Activated naive CD8-positive, alpha-beta T cell treated with anti-CD3 and anti-CD28 coated beads, Interleukin-2, amount 10 ng/mL, durations not matched to agents 7 days and 5 days (primary cell): ENCODE measurements at regions of chr6 and their contacts with region 1.

Region 1: GRCh38 chr6:28923318-28924102 is at the start of gene TRIM27:
- DNase-seq: peak; percentile 90
- ATAC-seq: peak; percentile 82
- H3K4me3 Mint-ChIP-seq: peak within 1 kb of the TSS; percentile 96
- H3K27ac Mint-ChIP-seq: peak within 1 kb of the TSS; percentile 95
- H3K4me1 Mint-ChIP-seq: peaks cover 22% of the 10 kb centered on the region
- H3K27me3 Mint-ChIP-seq: no peaks in the 10 kb centered on the region
- total RNA-seq, gene TRIM27: 64.4 to 67.1 TPM

Region 2: GRCh38 chr6:28719275-28719940 is 204.1 kb before region 1 on chr6:
- POLR2A ChIA-PET with region 1: no interaction called
- DNase-seq: no peak
- ATAC-seq: no peak
- H3K4me3 Mint-ChIP-seq: no peak overlapping the region
- H3K27ac Mint-ChIP-seq: no peak overlapping the region
- H3K4me1 Mint-ChIP-seq: no peaks in the 10 kb centered on the region
- H3K27me3 Mint-ChIP-seq: peaks cover 44% of the 10 kb centered on the region

Region 3: DNA sequence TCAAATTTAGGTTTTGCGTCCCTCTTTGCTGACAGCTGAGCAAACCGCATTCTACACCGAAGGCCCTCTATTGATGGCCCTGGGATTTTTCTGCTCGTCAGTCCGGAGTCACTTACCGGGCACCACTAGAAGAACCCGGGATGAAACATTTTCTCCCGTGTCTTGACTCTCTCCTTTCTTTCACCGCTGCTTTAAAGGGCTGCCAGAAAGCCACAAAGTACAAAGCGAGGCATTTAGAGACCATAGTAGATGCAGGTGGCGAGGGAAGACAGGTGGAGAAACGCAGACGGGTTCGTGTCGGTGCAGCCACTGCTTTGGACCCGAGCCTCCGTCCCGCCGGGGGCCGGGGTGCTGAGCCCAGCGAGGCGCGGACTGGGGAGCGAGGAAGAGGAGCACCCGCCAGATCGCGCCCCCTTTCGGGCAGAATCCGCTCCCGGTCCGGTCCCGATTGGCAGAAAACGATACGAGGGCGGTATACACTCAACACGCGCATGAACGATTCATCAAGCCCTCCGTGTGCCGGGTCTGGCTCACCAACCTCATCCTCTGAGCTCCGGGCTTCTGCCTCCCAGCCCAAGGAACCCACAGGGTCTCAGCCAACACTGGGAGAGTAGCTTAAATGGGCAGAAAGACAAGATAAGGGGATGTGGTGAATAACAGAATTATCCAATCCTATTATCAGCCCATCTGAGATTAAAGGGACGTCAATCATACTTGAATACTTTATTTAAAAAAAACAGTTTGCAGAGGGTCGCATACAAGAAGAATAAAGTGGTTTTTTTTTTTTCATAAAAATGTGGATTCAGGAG is 84.7 kb before region 1 on chr6:
- POLR2A ChIA-PET with region 1: interaction called, 11 read pairs
- DNase-seq: peak; percentile 85
- ATAC-seq: peak; percentile 80
- H3K4me3 Mint-ChIP-seq: peak overlapping the region; percentile 93
- H3K27ac Mint-ChIP-seq: peak overlapping the region; percentile 86
- H3K4me1 Mint-ChIP-seq: peaks cover 23% of the 10 kb centered on the region
- H3K27me3 Mint-ChIP-seq: peaks cover 42% of the 10 kb centered on the region

Region 4: GRCh38 chr6:28863604-28864320 is 59.7 kb before region 1 on chr6:
- POLR2A ChIA-PET with region 1: interaction called, 40 read pairs
- DNase-seq: peak; percentile 77
- ATAC-seq: peak; percentile 34
- H3K4me3 Mint-ChIP-seq: peak overlapping the region; percentile 92
- H3K27ac Mint-ChIP-seq: peak overlapping the region; percentile 88
- H3K4me1 Mint-ChIP-seq: peaks cover 39% of the 10 kb centered on the region
- H3K27me3 Mint-ChIP-seq: peaks cover 3% of the 10 kb centered on the region

Region 5: GRCh38 chr6:28880894-28881780 is 42.4 kb before region 1 on chr6:
- POLR2A ChIA-PET with region 1: interaction called, 28 read pairs
- DNase-seq: peak; percentile 64
- ATAC-seq: no peak
- H3K4me3 Mint-ChIP-seq: peak overlapping the region; percentile 84
- H3K27ac Mint-ChIP-seq: peak overlapping the region; percentile 81
- H3K4me1 Mint-ChIP-seq: peaks cover 29% of the 10 kb centered on the region
- H3K27me3 Mint-ChIP-seq: peaks cover 20% of the 10 kb centered on the region

Region 6: GRCh38 chr6:28895134-28895812 is 28.2 kb before region 1 on chr6:
- POLR2A ChIA-PET with region 1: interaction called, 76 read pairs
- DNase-seq: peak; percentile 80
- ATAC-seq: peak; percentile 78
- H3K4me3 Mint-ChIP-seq: peak overlapping the region; percentile 94
- H3K27ac Mint-ChIP-seq: peak overlapping the region; percentile 97
- H3K4me1 Mint-ChIP-seq: peaks cover 19% of the 10 kb centered on the region
- H3K27me3 Mint-ChIP-seq: no peaks in the 10 kb centered on the region

Region 7: GRCh38 chr6:28910902-28911690 is 12.4 kb before region 1 on chr6:
- POLR2A ChIA-PET with region 1: interaction called, 16 read pairs
- DNase-seq: no peak
- ATAC-seq: no peak
- H3K4me3 Mint-ChIP-seq: no peak overlapping the region
- H3K27ac Mint-ChIP-seq: no peak overlapping the region
- H3K4me1 Mint-ChIP-seq: peaks cover 3% of the 10 kb centered on the region
- H3K27me3 Mint-ChIP-seq: no peaks in the 10 kb centered on the region

Region 8: GRCh38 chr6:28940858-28941680 is 17.6 kb after region 1 on chr6:
- POLR2A ChIA-PET with region 1: interaction called, 39 read pairs
- DNase-seq: peak; percentile 60
- ATAC-seq: peak; percentile 66
- H3K4me3 Mint-ChIP-seq: peak overlapping the region; percentile 86
- H3K27ac Mint-ChIP-seq: peak overlapping the region; percentile 95
- H3K4me1 Mint-ChIP-seq: peaks cover 36% of the 10 kb centered on the region
- H3K27me3 Mint-ChIP-seq: peaks cover 4% of the 10 kb centered on the region

Region 9: DNA sequence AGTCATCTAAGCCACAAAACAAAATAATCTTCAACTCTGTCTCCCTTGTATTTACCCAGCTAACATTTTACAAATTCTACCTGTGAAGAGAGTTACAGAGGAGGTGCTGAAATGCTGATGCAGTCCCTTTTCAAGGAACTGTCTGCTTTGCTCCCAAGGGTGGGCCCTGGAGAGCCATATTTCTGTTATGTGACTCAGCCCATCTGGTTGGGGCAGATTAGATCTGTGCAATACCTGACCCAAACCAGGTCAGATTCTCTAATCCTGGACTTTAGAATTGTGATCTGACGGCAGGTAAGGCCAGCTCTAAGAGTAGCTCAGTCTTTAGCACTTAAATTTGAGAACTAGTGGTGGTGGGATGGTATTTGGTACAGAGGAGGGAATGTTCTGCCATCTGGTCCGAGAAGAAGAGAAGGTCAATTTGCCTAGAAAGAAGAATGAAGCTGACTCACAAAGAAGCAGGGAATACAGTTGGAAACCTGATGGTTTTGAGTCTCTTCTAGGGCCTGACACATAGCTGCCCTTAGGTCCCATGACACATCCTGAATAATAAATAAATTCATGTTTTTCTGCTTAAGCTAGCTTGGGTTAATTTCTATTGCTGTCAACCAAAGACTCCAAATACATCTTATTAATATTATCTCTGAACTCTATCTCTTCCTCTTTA is 73.5 kb after region 1 on chr6:
- POLR2A ChIA-PET with region 1: no interaction called
- DNase-seq: no peak
- ATAC-seq: no peak
- H3K4me3 Mint-ChIP-seq: no peak overlapping the region
- H3K27ac Mint-ChIP-seq: no peak overlapping the region
- H3K4me1 Mint-ChIP-seq: peaks cover 2% of the 10 kb centered on the region
- H3K27me3 Mint-ChIP-seq: peaks cover 10% of the 10 kb centered on the region